ENCODE measurements at regions of chr17 and their contacts with region 1.

Region 1: DNA sequence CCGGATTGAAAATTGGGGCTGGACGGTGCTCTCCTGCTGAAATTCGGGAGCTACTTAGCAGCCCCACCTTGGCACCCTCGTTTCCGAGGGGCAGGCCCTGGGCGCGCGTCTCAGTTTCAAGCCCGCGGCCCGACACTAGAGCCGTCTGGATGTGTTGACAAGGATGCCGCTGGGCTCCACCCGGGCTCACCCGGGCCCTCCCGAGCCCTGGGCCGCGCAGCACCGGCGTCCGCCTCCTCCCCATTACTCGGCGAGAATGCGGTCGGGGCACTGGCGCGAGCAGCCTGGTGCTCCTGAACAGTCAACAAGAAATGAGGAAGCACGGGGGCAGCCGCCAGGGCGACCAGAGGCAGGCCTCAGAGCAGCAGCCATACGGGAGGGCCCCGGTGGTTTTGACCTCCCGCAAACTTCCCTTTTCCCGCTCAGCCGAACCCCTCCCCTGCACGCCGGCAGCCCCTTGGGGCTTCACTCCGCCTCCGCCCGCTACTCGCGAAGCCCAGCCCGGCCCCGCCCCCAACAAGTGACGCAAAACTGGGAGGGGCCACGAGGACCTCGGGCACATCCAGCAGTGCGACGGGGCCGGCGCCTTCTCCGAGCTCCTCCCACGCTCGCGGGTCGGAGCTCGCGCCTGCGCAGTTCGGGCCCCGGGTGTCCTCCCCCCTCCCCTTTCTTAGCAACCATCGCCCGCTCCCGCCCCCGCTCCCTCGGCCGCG is 447 bp upstream of the SEC14L1 start:
- DNase-seq: peak; percentile 99 to 100 (median 100)
- ATAC-seq: peak; percentile 90
- H3K4me3 ChIP-seq: peak overlapping the region; percentile 67 to 69
- H3K4me3 Mint-ChIP-seq: peak overlapping the region; percentile 81
- H3K27ac ChIP-seq: peak overlapping the region; percentile 78 to 81
- H3K27ac Mint-ChIP-seq: peak overlapping the region; percentile 95
- H3K4me1 ChIP-seq: peaks cover 27% of the 10 kb centered on the region
- H3K4me1 Mint-ChIP-seq: peaks cover 49% of the 10 kb centered on the region
- H3K27me3 ChIP-seq: no peaks in the 10 kb centered on the region
- H3K27me3 Mint-ChIP-seq: no peaks in the 10 kb centered on the region
- CTCF ChIP-seq: no peak

Region 2: GRCh38 chr17:76997981-76998531 is 142.3 kb before region 1 on chr17:
- CTCF ChIA-PET with region 1: no interaction called
- POLR2A ChIA-PET with region 1: no interaction called
- intact Hi-C with region 1: loop called in 1 of 2 experiments (anchors 1 kb)
- DNase-seq: peak; percentile 29 to 95 (median 55)
- ATAC-seq: peak; percentile 90
- H3K4me3 ChIP-seq: peak overlapping the region; percentile 1 to 14
- H3K4me3 Mint-ChIP-seq: peak overlapping the region; percentile 58
- H3K27ac ChIP-seq: peak overlapping the region; percentile 52 to 83
- H3K27ac Mint-ChIP-seq: peak overlapping the region; percentile 89
- H3K4me1 ChIP-seq: peaks cover 58% of the 10 kb centered on the region
- H3K4me1 Mint-ChIP-seq: peaks cover 57% of the 10 kb centered on the region
- H3K27me3 ChIP-seq: no peaks in the 10 kb centered on the region
- H3K27me3 Mint-ChIP-seq: no peaks in the 10 kb centered on the region
- CTCF ChIP-seq: no peak

Region 3: GRCh38 chr17:77088455-77089123 is 51.7 kb before region 1 on chr17:
- CTCF ChIA-PET with region 1: interaction called, 6 read pairs
- POLR2A ChIA-PET with region 1: interaction called, 23 read pairs
- intact Hi-C with region 1: loop called (anchors 1 to 2 kb)
- DNase-seq: peak; percentile 73 to 96 (median 86)
- ATAC-seq: peak; percentile 82
- H3K4me3 ChIP-seq: peak overlapping the region; percentile 55 to 96
- H3K4me3 Mint-ChIP-seq: peak overlapping the region; percentile 98
- H3K27ac ChIP-seq: peak overlapping the region; percentile 81 to 93
- H3K27ac Mint-ChIP-seq: peak overlapping the region; percentile 99
- H3K4me1 ChIP-seq: peaks cover 37% of the 10 kb centered on the region
- H3K4me1 Mint-ChIP-seq: peaks cover 48% of the 10 kb centered on the region
- H3K27me3 ChIP-seq: no peaks in the 10 kb centered on the region
- H3K27me3 Mint-ChIP-seq: peaks cover 2% of the 10 kb centered on the region
- CTCF ChIP-seq: peak; percentile 64

Region 4: GRCh38 chr17:77096570-77097214 is 43.6 kb before region 1 on chr17:
- CTCF ChIA-PET with region 1: no interaction called
- POLR2A ChIA-PET with region 1: no interaction called
- intact Hi-C with region 1: loop called (anchors 1 kb)
- DNase-seq: peak in 2 of 9 experiments; percentile 51 to 69
- ATAC-seq: peak; percentile 64
- H3K4me3 ChIP-seq: no peak overlapping the region
- H3K4me3 Mint-ChIP-seq: peak overlapping the region; percentile 13
- H3K27ac ChIP-seq: no peak overlapping the region
- H3K27ac Mint-ChIP-seq: peak overlapping the region; percentile 96
- H3K4me1 ChIP-seq: peaks cover 28% of the 10 kb centered on the region
- H3K4me1 Mint-ChIP-seq: peaks cover 44% of the 10 kb centered on the region
- H3K27me3 ChIP-seq: no peaks in the 10 kb centered on the region
- H3K27me3 Mint-ChIP-seq: no peaks in the 10 kb centered on the region
- CTCF ChIP-seq: peak; percentile 76

Region 5: DNA sequence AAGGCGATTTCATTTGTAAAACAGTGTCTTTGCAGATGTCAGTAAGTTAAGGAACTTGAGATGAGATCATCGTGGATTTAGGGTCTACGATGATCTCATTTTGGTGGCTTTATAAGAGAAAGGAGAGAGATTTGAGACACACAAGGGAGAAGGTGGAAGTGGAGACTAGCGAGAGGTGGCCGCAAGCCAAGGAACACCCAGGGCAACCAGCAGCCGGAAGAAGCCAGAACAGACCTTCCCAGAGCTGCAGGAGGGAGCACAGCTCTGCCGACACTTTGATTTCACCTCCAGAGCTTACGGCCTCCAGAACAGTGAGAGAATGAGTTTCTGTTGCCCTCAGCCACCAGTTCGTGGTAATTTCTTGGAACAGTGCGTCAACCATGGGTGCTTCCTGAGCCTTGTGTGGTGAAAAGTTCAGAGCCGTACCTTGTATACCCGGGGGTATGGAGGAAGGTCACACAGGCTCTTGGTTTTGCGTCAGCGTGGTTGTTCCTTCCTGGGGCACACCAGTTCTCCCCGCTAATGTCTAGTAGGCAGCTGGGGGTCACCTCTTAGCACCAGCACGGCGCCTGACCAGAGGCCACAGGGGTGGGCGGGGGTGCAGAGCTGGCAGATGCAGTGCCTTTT is 12.5 kb before region 1 on chr17:
- CTCF ChIA-PET with region 1: interaction called, 3 read pairs
- POLR2A ChIA-PET with region 1: interaction called, 33 read pairs
- intact Hi-C with region 1: loop called in 1 of 2 experiments (anchors 1 kb)
- DNase-seq: peak; percentile 37 to 93 (median 73)
- ATAC-seq: peak; percentile 89
- H3K4me3 ChIP-seq: peak overlapping the region; percentile 35 to 38
- H3K4me3 Mint-ChIP-seq: peak overlapping the region; percentile 65
- H3K27ac ChIP-seq: peak overlapping the region; percentile 56 to 81
- H3K27ac Mint-ChIP-seq: peak overlapping the region; percentile 93
- H3K4me1 ChIP-seq: peaks cover 22% of the 10 kb centered on the region
- H3K4me1 Mint-ChIP-seq: peaks cover 23% of the 10 kb centered on the region
- H3K27me3 ChIP-seq: no peaks in the 10 kb centered on the region
- H3K27me3 Mint-ChIP-seq: no peaks in the 10 kb centered on the region
- CTCF ChIP-seq: no peak

Region 6: GRCh38 chr17:77186141-77186604 is 45.9 kb after region 1 on chr17:
- CTCF ChIA-PET with region 1: interaction called, 3 read pairs
- POLR2A ChIA-PET with region 1: interaction called, 13 read pairs
- intact Hi-C with region 1: no loop called
- DNase-seq: peak in 5 of 9 experiments; percentile 22 to 51 (median 33)
- ATAC-seq: peak; percentile 28
- H3K4me3 ChIP-seq: no peak overlapping the region
- H3K4me3 Mint-ChIP-seq: no peak overlapping the region
- H3K27ac ChIP-seq: no peak overlapping the region
- H3K27ac Mint-ChIP-seq: no peak overlapping the region
- H3K4me1 ChIP-seq: peaks cover 58% of the 10 kb centered on the region
- H3K4me1 Mint-ChIP-seq: peaks cover 51% of the 10 kb centered on the region
- H3K27me3 ChIP-seq: no peaks in the 10 kb centered on the region
- H3K27me3 Mint-ChIP-seq: no peaks in the 10 kb centered on the region
- CTCF ChIP-seq: no peak